ENCODE measurements at regions of chrX and their contacts with region 1.

Region 1: DNA sequence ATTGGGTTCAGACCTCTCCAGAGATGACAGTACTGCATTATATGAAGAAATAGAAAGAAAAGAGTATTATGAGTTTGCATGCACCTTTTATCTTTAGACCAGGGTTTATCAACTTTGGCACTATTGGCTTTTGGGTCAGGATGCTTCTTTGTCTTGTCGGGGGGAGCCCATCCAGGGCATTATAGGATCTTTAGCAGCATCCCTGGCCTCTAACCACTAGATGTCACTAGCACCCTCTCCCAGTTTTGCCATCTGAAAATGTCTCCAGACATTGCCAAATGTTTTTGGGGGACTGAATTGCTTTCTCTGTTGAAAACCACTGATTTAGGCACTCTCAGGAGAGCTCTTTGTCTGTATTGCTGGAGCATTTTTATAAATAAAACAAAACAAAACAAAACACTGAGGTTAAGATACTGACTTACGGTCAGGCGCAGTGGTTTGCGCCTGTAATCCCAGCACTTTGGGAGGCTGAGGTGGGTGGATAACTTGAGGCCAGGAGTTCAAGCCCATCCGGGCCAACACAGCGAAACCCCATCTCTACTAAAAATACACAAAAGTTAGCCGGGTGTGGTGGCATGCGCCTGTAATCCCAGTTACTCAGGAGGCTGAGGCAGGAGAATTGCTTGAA is 23.6 kb downstream of the CA5B start:
- DNase-seq: peak; percentile 49
- H3K4me3 Mint-ChIP-seq: no peak overlapping the region
- H3K27ac Mint-ChIP-seq: peak overlapping the region; percentile 80
- H3K4me1 Mint-ChIP-seq: peaks cover 49% of the 10 kb centered on the region
- H3K27me3 Mint-ChIP-seq: no peaks in the 10 kb centered on the region

Region 2: GRCh38 chrX:15749642-15750610 is 11.8 kb before region 1 on chrX:
- CTCF ChIA-PET with region 1: interaction called, 4 read pairs
- POLR2A ChIA-PET with region 1: no interaction called
- intact Hi-C with region 1: loop called (anchors 1 kb)
- DNase-seq: peak; percentile 35
- H3K4me3 Mint-ChIP-seq: peak overlapping the region; percentile 53
- H3K27ac Mint-ChIP-seq: peak overlapping the region; percentile 94
- H3K4me1 Mint-ChIP-seq: peaks cover 67% of the 10 kb centered on the region
- H3K27me3 Mint-ChIP-seq: no peaks in the 10 kb centered on the region

Region 3: DNA sequence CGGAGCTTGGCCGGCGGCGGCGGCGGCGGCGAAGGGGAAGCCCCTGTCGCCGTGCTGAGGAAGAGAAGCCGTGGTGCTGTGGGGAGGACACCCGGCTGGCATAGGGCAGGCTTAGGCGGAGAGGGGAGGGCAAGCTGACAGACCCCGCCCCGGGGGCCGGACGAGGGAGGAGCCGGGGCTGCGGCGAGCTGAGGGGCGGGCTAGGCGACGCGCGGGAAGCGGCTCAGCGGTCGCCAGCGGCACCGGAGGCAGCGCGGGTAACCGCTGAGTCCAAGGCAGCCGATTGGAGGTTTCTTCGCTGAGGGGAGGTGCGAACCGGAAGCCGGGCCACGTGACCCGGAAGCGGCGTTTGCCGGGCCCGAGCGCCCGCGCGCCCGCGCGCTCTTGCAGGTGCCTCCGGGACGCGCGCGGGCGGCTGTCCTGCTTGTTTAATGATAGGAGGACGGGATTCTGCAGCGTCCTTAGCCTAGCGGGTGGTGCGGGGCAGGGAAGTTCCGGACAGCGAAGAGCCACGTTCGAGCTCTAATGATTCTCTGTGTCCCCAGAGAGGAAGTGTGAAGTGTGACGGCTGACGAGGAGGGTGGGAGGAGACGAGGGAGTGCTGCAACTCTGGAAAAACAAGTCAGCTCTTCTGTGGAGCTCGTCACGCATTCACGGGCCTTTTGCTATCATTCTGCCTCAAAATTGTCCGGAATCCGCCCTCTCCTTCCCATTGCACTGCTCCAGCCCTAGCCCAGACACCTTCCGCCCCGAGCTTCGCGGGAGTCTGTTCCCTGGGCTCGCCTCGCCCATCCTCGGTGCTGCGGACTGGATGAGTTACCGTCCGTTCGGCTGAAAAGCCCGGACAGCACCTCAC is 93.3 kb after region 1 on chrX and contains the start of gene AP1S2:
- CTCF ChIA-PET with region 1: no interaction called
- POLR2A ChIA-PET with region 1: no interaction called
- intact Hi-C with region 1: loop called (anchors 1 kb)
- DNase-seq: peak; percentile 94
- H3K4me3 Mint-ChIP-seq: peak within 1 kb of the TSS; percentile 86
- H3K27ac Mint-ChIP-seq: peak within 1 kb of the TSS; percentile 95
- H3K4me1 Mint-ChIP-seq: peaks cover 23% of the 10 kb centered on the region
- H3K27me3 Mint-ChIP-seq: no peaks in the 10 kb centered on the region
- total RNA-seq, gene AP1S2: 21.4 to 29.3 TPM

Region 4: GRCh38 chrX:15960237-15960636 is 198.6 kb after region 1 on chrX:
- CTCF ChIA-PET with region 1: no interaction called
- POLR2A ChIA-PET with region 1: no interaction called
- intact Hi-C with region 1: no loop called
- DNase-seq: no peak
- H3K4me3 Mint-ChIP-seq: no peak overlapping the region
- H3K27ac Mint-ChIP-seq: no peak overlapping the region
- H3K4me1 Mint-ChIP-seq: no peaks in the 10 kb centered on the region
- H3K27me3 Mint-ChIP-seq: no peaks in the 10 kb centered on the region

Region 5: GRCh38 chrX:16123222-16123786 is 361.6 kb after region 1 on chrX and contains the start of gene GRPR:
- CTCF ChIA-PET with region 1: no interaction called
- POLR2A ChIA-PET with region 1: no interaction called
- intact Hi-C with region 1: loop called (anchors 5 kb)
- DNase-seq: peak; percentile 69
- H3K4me3 Mint-ChIP-seq: no peak within 1 kb of the TSS
- H3K27ac Mint-ChIP-seq: no peak within 1 kb of the TSS
- H3K4me1 Mint-ChIP-seq: peaks cover 19% of the 10 kb centered on the region
- H3K27me3 Mint-ChIP-seq: peaks cover 4% of the 10 kb centered on the region
- total RNA-seq, gene GRPR: not detected